CD8-positive, alpha-beta T cell (primary cell): ENCODE measurements at regions of chr14 and their contacts with region 1.

Region 1: DNA sequence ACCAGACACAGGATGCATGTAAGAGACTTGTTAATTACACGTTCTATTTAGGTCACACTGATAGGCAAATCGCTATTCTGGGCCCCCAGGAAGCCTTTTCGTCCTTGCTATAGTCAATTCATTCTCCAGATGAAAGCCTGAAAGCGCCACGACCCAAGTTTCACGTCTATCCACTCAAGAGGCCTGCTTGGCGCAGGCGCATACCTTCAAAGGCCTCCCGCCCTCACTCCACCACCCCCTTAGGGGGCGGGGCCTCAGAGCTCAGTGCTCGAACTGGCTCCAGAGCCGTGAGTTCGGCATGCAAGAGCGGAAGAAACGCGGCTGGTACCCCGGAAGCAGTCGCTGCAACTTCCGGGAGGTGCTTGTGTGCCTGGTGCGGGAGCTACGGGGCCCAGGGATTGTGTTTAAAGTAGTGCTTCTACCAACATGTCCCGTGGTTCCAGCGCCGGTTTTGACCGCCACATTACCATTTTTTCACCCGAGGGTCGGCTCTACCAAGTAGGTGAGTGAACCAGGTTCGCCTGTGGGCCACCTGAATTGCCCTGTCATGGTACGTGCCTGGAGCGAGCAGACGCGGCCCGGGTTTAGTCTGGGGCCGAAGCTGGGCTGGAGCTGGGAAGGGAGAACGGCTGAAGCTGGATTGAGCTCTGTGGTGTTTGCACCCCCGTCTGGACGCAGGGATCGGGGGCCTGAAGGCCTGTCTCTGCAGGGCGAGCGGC is at the start of gene PSMA6:
- DNase-seq: peak; percentile 98 to 100 (median 99)
- ATAC-seq: peak; percentile 97
- H3K4me3 ChIP-seq: peak within 1 kb of the TSS; percentile 79 to 85
- H3K4me3 Mint-ChIP-seq: peak within 1 kb of the TSS; percentile 98
- H3K27ac ChIP-seq: peak within 1 kb of the TSS; percentile 82 to 91
- H3K27ac Mint-ChIP-seq: peak within 1 kb of the TSS; percentile 98
- H3K4me1 ChIP-seq: peaks cover 31% of the 10 kb centered on the region
- H3K4me1 Mint-ChIP-seq: peaks cover 48% of the 10 kb centered on the region
- H3K27me3 ChIP-seq: no peaks in the 10 kb centered on the region
- H3K27me3 Mint-ChIP-seq: no peaks in the 10 kb centered on the region
- CTCF ChIP-seq: no peak
- total RNA-seq, gene PSMA6: 72.3 to 78.9 TPM

Region 2: GRCh38 chr14:34629657-34630529 is 662.3 kb before region 1 on chr14 and contains the start of gene SNX6:
- CTCF ChIA-PET with region 1: no interaction called
- POLR2A ChIA-PET with region 1: no interaction called
- intact Hi-C with region 1: loop called in 1 of 2 experiments (anchors 5 kb)
- DNase-seq: peak; percentile 70 to 92 (median 83)
- ATAC-seq: peak; percentile 96
- H3K4me3 ChIP-seq: peak within 1 kb of the TSS; percentile 95 to 100
- H3K4me3 Mint-ChIP-seq: peak within 1 kb of the TSS; percentile 94
- H3K27ac ChIP-seq: peak within 1 kb of the TSS; percentile 91 to 96
- H3K27ac Mint-ChIP-seq: peak within 1 kb of the TSS; percentile 93
- H3K4me1 ChIP-seq: peaks cover 20% of the 10 kb centered on the region
- H3K4me1 Mint-ChIP-seq: peaks cover 37% of the 10 kb centered on the region
- H3K27me3 ChIP-seq: no peaks in the 10 kb centered on the region
- H3K27me3 Mint-ChIP-seq: peaks cover 4% of the 10 kb centered on the region
- CTCF ChIP-seq: no peak
- total RNA-seq, gene SNX6: 51.2 to 53.5 TPM

Region 3: DNA sequence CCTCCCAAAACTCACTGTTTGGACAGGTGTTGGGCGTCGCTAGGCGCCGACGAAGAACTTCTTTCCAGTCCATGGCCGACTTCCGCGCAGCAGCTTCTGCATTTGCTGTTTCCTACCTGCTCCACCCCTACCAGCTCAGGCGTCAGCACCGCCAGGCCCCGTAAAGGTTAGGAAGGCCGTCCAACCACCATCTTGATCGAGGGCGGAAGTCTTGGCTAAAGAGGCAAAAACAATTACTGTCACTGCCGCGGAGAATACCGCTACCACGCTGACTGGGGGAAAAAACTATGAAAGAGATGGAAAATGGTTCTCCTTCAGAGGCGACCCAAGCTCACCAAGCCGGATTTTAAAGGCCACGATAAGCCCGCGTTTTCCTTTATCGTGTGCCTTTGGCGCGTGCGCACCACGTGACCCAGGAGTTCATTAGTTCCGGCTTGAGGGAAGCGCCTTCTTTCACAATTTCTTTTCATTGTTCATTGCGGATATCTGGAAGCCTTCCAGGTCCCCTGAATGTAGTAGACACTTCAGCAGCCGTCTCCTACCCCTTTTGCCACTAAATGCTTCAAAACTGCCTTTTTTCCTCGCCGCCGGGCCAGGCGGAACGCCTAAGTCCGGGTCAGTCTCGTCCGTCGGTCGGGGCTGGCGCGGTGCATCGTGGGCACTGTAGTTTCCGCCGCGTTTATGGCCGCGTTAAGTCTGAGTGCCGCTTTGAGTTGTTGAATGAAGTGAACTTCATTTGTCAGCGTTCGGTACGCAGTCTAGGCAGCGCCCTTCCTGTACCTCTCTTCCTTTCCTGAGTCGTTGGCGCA is 170.1 kb before region 1 on chr14 and contains the starts of genes PPP2R3C and PRORP:
- CTCF ChIA-PET with region 1: no interaction called
- POLR2A ChIA-PET with region 1: interaction called, 5 read pairs
- intact Hi-C with region 1: loop called (anchors 1 kb)
- DNase-seq: peak; percentile 78 to 96 (median 88)
- ATAC-seq: peak; percentile 83
- H3K4me3 ChIP-seq: peak within 1 kb of the TSS; percentile 71 to 90
- H3K4me3 Mint-ChIP-seq: peak within 1 kb of the TSS; percentile 99
- H3K27ac ChIP-seq: peak within 1 kb of the TSS; percentile 96 to 97
- H3K27ac Mint-ChIP-seq: peak within 1 kb of the TSS; percentile 100
- H3K4me1 ChIP-seq: peaks cover 33% of the 10 kb centered on the region
- H3K4me1 Mint-ChIP-seq: peaks cover 66% of the 10 kb centered on the region
- H3K27me3 ChIP-seq: no peaks in the 10 kb centered on the region
- H3K27me3 Mint-ChIP-seq: no peaks in the 10 kb centered on the region
- CTCF ChIP-seq: no peak
- total RNA-seq, gene PPP2R3C: 44.2 to 51.4 TPM
- total RNA-seq, gene PRORP: 16.5 to 21.9 TPM

Region 4: GRCh38 chr14:35205737-35206136 is 86.5 kb before region 1 on chr14:
- CTCF ChIA-PET with region 1: no interaction called
- POLR2A ChIA-PET with region 1: no interaction called
- intact Hi-C with region 1: no loop called
- DNase-seq: peak in 2 of 9 experiments; percentile 18 to 44
- ATAC-seq: no peak
- H3K4me3 ChIP-seq: no peak overlapping the region
- H3K4me3 Mint-ChIP-seq: no peak overlapping the region
- H3K27ac ChIP-seq: peak overlapping the region in 1 of 2 experiments; percentile 65
- H3K27ac Mint-ChIP-seq: peak overlapping the region; percentile 68
- H3K4me1 ChIP-seq: peaks cover 29% of the 10 kb centered on the region
- H3K4me1 Mint-ChIP-seq: peaks cover 34% of the 10 kb centered on the region
- H3K27me3 ChIP-seq: no peaks in the 10 kb centered on the region
- H3K27me3 Mint-ChIP-seq: no peaks in the 10 kb centered on the region
- CTCF ChIP-seq: no peak

Region 5: DNA sequence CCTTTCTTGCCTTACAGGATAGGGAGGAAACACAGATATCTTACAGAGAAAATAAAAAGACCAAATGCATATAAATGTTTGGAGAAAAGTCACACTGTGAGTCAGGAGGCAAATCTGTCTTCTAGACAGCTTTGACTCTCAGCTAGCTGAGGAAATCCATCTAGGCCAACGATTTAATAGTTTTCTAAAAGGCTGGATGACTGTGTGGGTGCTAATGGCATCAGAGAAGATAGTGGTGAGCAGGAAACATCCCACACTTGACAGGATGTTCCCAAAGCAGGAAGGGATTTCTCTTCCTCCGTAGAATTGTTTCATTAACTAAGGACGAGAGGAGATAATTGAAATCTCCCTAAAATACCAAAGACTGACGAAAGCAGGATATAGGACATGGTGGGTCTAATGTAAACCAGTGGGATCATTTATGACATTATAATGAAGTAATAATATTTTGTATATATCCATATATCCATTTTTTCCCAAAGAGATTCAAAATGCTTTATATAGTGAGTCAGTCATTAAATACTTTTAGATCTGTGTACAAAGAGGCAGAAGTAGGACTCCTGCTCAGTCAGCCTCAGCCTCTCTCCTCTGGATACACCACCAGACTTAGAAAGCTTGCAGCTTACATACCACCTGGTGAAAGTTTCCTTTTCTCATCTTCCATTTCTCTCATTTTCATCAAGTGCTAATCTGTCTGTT is 44.3 kb before region 1 on chr14:
- CTCF ChIA-PET with region 1: no interaction called
- POLR2A ChIA-PET with region 1: no interaction called
- intact Hi-C with region 1: loop called in 1 of 2 experiments (anchors 5 kb)
- DNase-seq: no peak
- ATAC-seq: no peak
- H3K4me3 ChIP-seq: no peak overlapping the region
- H3K4me3 Mint-ChIP-seq: no peak overlapping the region
- H3K27ac ChIP-seq: no peak overlapping the region
- H3K27ac Mint-ChIP-seq: peak overlapping the region; percentile 5
- H3K4me1 ChIP-seq: no peaks in the 10 kb centered on the region
- H3K4me1 Mint-ChIP-seq: peaks cover 4% of the 10 kb centered on the region
- H3K27me3 ChIP-seq: no peaks in the 10 kb centered on the region
- H3K27me3 Mint-ChIP-seq: no peaks in the 10 kb centered on the region
- CTCF ChIP-seq: no peak

Region 6: GRCh38 chr14:35341446-35342159 is 49.4 kb after region 1 on chr14:
- CTCF ChIA-PET with region 1: no interaction called
- POLR2A ChIA-PET with region 1: interaction called, 7 read pairs
- intact Hi-C with region 1: loop called in 1 of 2 experiments (anchors 10 kb)
- DNase-seq: peak in 6 of 9 experiments; percentile 22 to 69 (median 53)
- ATAC-seq: peak; percentile 95
- H3K4me3 ChIP-seq: no peak overlapping the region
- H3K4me3 Mint-ChIP-seq: peak overlapping the region; percentile 3
- H3K27ac ChIP-seq: no peak overlapping the region
- H3K27ac Mint-ChIP-seq: peak overlapping the region; percentile 22
- H3K4me1 ChIP-seq: peaks cover 29% of the 10 kb centered on the region
- H3K4me1 Mint-ChIP-seq: peaks cover 32% of the 10 kb centered on the region
- H3K27me3 ChIP-seq: no peaks in the 10 kb centered on the region
- H3K27me3 Mint-ChIP-seq: no peaks in the 10 kb centered on the region
- CTCF ChIP-seq: no peak

Region 7: DNA sequence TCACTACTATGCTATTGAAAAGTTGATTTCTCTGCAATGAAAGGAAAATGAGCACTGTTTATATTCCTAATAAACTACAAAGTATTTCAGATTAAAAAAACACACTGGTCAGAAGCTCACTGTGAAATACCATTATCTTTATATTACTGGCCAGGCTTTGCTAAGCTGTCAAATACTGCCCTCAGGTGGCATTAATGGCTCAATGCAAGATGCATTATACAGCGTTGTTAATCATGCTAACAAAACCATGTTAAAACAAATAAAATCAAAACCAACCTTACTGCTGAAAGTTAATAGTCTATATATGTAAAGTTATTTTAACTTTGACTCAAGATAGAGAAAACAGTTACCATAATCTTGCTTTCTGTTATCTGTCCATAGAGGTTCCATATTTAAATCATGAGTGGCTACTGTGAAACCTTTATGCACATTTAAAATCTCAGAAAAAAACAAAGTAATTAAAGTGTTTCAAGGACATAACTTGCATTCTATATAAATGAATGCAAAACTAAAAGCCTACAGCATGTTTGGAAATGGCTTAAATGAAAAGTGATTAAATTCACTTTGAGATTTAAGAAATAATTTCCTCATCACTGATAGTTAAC is 395.2 kb after region 1 on chr14:
- CTCF ChIA-PET with region 1: no interaction called
- POLR2A ChIA-PET with region 1: no interaction called
- intact Hi-C with region 1: no loop called
- DNase-seq: peak in 5 of 9 experiments; percentile 3 to 53 (median 24)
- ATAC-seq: peak; percentile 46
- H3K4me3 ChIP-seq: no peak overlapping the region
- H3K4me3 Mint-ChIP-seq: no peak overlapping the region
- H3K27ac ChIP-seq: no peak overlapping the region
- H3K27ac Mint-ChIP-seq: no peak overlapping the region
- H3K4me1 ChIP-seq: no peaks in the 10 kb centered on the region
- H3K4me1 Mint-ChIP-seq: no peaks in the 10 kb centered on the region
- H3K27me3 ChIP-seq: no peaks in the 10 kb centered on the region
- H3K27me3 Mint-ChIP-seq: no peaks in the 10 kb centered on the region
- CTCF ChIP-seq: peak; percentile 73